ENCODE measurements at regions of chr5 and their contacts with region 1.

Region 1: GRCh38 chr5:90409318-90410177 is at the start of gene CETN3:
- DNase-seq: peak; percentile 94
- ATAC-seq: peak; percentile 96
- H3K4me3 Mint-ChIP-seq: no peak within 1 kb of the TSS
- H3K27ac Mint-ChIP-seq: no peak within 1 kb of the TSS
- H3K4me1 Mint-ChIP-seq: peaks cover 23% of the 10 kb centered on the region
- H3K27me3 Mint-ChIP-seq: no peaks in the 10 kb centered on the region
- total RNA-seq, gene CETN3: 52.8 to 53.5 TPM

Region 2: DNA sequence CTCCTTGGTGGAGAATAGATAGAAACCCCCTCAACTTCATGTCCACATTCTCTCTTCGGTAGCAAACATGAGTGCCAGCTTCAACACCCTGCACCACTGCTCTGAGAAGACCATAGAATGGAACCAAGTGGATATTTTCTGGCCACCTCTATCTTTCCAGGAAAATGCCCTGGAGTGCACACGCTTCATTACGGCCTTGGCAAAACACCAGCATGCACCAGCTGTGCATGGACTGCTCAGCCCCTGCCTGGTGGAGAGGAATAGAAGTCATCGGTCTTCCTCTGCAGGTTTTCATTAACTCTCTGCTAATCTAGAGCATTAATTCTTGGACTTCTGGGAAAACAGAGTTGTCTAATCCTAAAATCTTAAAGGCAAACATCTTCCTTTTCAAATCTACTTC is 1929.3 kb before region 1 on chr5:
- CTCF ChIA-PET with region 1: no interaction called
- POLR2A ChIA-PET with region 1: interaction called, 10 read pairs
- intact Hi-C with region 1: no loop called
- DNase-seq: no peak
- ATAC-seq: no peak
- H3K4me3 Mint-ChIP-seq: no peak overlapping the region
- H3K27ac Mint-ChIP-seq: no peak overlapping the region
- H3K4me1 Mint-ChIP-seq: no peaks in the 10 kb centered on the region
- H3K27me3 Mint-ChIP-seq: peaks cover 8% of the 10 kb centered on the region

Region 3: GRCh38 chr5:90381211-90381929 is 28.2 kb before region 1 on chr5:
- CTCF ChIA-PET with region 1: no interaction called
- POLR2A ChIA-PET with region 1: no interaction called
- intact Hi-C with region 1: no loop called
- DNase-seq: no peak
- ATAC-seq: no peak
- H3K4me3 Mint-ChIP-seq: no peak overlapping the region
- H3K27ac Mint-ChIP-seq: no peak overlapping the region
- H3K4me1 Mint-ChIP-seq: no peaks in the 10 kb centered on the region
- H3K27me3 Mint-ChIP-seq: peaks cover 3% of the 10 kb centered on the region

Region 4: DNA sequence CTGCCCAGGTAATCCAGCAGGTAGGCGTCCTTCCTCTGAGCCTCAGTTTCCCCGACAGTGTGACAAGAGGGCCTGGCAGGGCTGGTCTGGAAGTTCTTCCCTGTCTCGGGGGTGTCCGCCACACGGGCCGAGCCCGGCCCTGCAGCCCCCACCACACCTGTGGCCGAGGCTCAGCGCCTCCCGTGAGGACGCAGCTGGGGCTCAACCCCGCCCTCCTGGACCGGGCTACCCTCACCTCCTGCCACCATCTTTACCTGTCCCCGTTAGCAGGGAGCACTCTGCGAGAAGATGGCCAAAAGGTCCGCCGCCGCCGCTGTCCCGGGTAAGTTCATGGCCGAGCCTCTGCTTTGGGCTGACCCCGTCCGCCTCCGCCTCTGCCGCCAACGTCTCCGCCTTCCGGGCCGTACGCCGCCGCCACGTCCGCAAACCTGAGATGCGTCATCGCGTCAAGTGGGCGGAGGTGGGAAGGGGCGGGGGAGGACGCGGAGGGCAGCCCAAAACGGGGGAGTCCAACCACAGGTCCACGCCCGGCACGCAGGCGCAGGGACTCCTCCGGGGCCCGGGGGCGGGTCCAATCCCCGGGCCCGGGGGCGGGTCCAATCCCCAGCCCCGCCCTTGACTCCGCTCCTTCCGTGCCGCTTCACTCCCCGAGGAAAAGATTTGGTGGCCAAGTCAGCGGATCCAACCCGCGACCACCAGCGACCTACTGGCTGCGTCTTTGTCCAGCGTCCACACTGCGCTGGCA is 119.8 kb after region 1 on chr5 and contains the start of gene LYSMD3:
- CTCF ChIA-PET with region 1: interaction called, 4 read pairs
- POLR2A ChIA-PET with region 1: interaction called, 4 read pairs
- intact Hi-C with region 1: loop called (anchors 1 kb)
- DNase-seq: peak; percentile 97
- ATAC-seq: peak; percentile 94
- H3K4me3 Mint-ChIP-seq: peak within 1 kb of the TSS; percentile 85
- H3K27ac Mint-ChIP-seq: peak within 1 kb of the TSS; percentile 95
- H3K4me1 Mint-ChIP-seq: peaks cover 27% of the 10 kb centered on the region
- H3K27me3 Mint-ChIP-seq: peaks cover 7% of the 10 kb centered on the region
- total RNA-seq, gene LYSMD3: 11.6 to 12.5 TPM